ENCODE measurements at regions of chr19 and their contacts with region 1.

Region 1: DNA sequence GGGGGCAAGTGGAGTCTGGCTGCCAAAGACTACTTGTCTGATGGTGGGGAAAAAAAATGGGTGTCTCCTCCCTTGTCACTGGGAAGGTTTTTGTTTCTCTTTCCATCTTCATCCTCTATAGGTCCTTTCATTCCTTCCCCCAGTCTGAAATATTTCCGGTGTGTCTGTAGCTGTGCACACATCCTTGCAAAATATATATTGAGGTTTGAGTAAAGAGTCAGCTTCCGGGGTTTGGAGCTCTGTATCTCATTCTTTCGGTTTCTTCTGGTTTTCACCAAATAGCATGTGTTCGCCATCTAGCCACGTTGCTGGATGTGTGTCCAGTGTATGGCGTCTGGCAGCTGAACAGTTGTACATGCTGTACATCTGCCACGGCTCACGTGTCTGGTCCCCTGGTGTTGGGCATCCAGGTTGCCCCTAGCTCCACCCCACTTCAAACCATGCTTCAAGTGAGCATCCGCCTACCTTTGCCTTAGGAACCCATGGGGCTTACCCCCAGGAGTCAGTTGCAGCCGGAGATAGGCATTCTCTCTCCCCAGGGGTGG is 142.2 kb downstream of the SIPA1L3 start:
- DNase-seq: peak; percentile 17 to 83 (median 43)
- ATAC-seq: peak; percentile 91 to 93 (median 92)
- H3K4me3 ChIP-seq: peak overlapping the region; percentile 34 to 53
- H3K4me3 Mint-ChIP-seq: peak overlapping the region; percentile 72 to 82 (median 79)
- H3K27ac ChIP-seq: peak overlapping the region; percentile 89
- H3K27ac Mint-ChIP-seq: peak overlapping the region; percentile 95 to 96
- H3K4me1 ChIP-seq: peaks cover 24 to 44% of the 10 kb centered on the region in 2 experiments
- H3K4me1 Mint-ChIP-seq: peaks cover 49 to 64% (median 51%) of the 10 kb centered on the region in 3 donors
- H3K27me3 ChIP-seq: no peaks in the 10 kb centered on the region
- H3K27me3 Mint-ChIP-seq: no peaks in the 10 kb centered on the region

Region 2: GRCh38 chr19:37452500-37453245 is 596.5 kb before region 1 on chr19:
- CTCF ChIA-PET with region 1: no interaction called
- POLR2A ChIA-PET with region 1: no interaction called
- DNase-seq: no peak
- ATAC-seq: no peak
- H3K4me3 ChIP-seq: no peak overlapping the region
- H3K4me3 Mint-ChIP-seq: no peak overlapping the region
- H3K27ac ChIP-seq: no peak overlapping the region
- H3K27ac Mint-ChIP-seq: no peak overlapping the region
- H3K4me1 ChIP-seq: no peaks in the 10 kb centered on the region
- H3K4me1 Mint-ChIP-seq: peaks cover 0 to 2% (median 0%) of the 10 kb centered on the region in 3 donors
- H3K27me3 ChIP-seq: no peaks in the 10 kb centered on the region
- H3K27me3 Mint-ChIP-seq: no peaks in the 10 kb centered on the region

Region 3: GRCh38 chr19:37906869-37907734 is 142.1 kb before region 1 on chr19 and contains the start of gene SIPA1L3:
- CTCF ChIA-PET with region 1: interaction called, 8 to 12 read pairs
- POLR2A ChIA-PET with region 1: no interaction called
- DNase-seq: peak; percentile 83 to 96 (median 90)
- ATAC-seq: peak; percentile 97 to 99 (median 98)
- H3K4me3 ChIP-seq: peak within 1 kb of the TSS; percentile 80 to 91
- H3K4me3 Mint-ChIP-seq: peak within 1 kb of the TSS; percentile 77 to 92 (median 91)
- H3K27ac ChIP-seq: peak within 1 kb of the TSS; percentile 59
- H3K27ac Mint-ChIP-seq: peak within 1 kb of the TSS; percentile 85 to 90
- H3K4me1 ChIP-seq: peaks cover 7 to 23% of the 10 kb centered on the region in 2 experiments
- H3K4me1 Mint-ChIP-seq: peaks cover 32 to 38% (median 33%) of the 10 kb centered on the region in 3 donors
- H3K27me3 ChIP-seq: no peaks in the 10 kb centered on the region
- H3K27me3 Mint-ChIP-seq: no peaks in the 10 kb centered on the region
- total RNA-seq, gene SIPA1L3: 26.2 to 40.6 (median 35.5) TPM

Region 4: GRCh38 chr19:38134540-38135149 is 85.5 kb after region 1 on chr19:
- CTCF ChIA-PET with region 1: interaction called in 1 of 2 experiments, 22 read pairs
- POLR2A ChIA-PET with region 1: no interaction called
- DNase-seq: peak in 16 of 35 experiments; percentile 7 to 57 (median 16)
- ATAC-seq: no peak
- H3K4me3 ChIP-seq: no peak overlapping the region
- H3K4me3 Mint-ChIP-seq: no peak overlapping the region
- H3K27ac ChIP-seq: no peak overlapping the region
- H3K27ac Mint-ChIP-seq: no peak overlapping the region
- H3K4me1 ChIP-seq: no peaks in the 10 kb centered on the region
- H3K4me1 Mint-ChIP-seq: peaks cover 0 to 6% (median 0%) of the 10 kb centered on the region in 3 donors
- H3K27me3 ChIP-seq: no peaks in the 10 kb centered on the region
- H3K27me3 Mint-ChIP-seq: no peaks in the 10 kb centered on the region

Region 5: DNA sequence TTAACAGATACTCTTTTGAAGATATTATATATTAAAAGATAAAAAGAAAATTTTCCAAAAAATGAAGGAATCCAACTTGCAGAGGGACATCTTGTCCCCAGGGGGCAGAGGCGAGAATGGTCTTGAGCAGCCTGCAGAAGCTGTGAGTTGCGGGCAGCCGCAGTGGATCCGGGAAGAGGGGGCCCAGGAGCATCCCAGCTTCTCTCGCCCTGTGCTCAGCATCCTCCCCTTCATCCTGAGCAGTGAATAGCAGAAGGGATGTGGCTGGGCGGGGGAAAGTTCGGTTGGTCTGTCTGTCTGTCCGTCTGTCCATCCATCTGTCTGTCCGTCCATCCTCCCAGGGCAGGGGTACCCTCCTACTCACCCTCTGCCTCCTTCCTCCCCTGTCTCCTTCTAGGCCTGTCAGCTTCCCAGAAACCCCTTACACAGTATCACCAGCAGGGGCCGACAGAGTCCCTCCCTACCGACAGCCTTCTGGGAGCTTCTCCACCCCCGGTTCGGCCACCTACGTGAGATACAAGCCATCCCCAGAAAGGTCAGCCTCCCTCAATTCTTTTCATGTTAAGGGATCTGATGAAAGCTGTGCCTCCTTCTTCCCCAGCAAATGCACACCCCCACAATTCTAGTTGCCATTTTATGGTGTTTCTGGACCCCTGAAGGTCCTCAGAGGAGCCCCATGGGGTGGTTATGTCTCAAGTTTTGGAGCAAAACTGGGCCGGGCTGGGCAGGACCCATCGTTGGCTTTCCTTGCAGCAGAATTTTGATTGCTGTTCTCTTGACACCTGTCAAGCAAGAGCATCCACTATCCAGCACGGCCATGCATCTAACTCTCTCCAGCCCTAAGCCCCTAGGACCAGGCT is 93.2 kb after region 1 on chr19:
- CTCF ChIA-PET with region 1: interaction called in 1 of 2 experiments, 10 read pairs
- POLR2A ChIA-PET with region 1: no interaction called
- DNase-seq: peak in 21 of 35 experiments; percentile 7 to 39 (median 19)
- ATAC-seq: peak in 2 of 4 experiments; percentile 52 to 59
- H3K4me3 ChIP-seq: no peak overlapping the region
- H3K4me3 Mint-ChIP-seq: no peak overlapping the region
- H3K27ac ChIP-seq: no peak overlapping the region
- H3K27ac Mint-ChIP-seq: no peak overlapping the region
- H3K4me1 ChIP-seq: no peaks in the 10 kb centered on the region
- H3K4me1 Mint-ChIP-seq: peaks cover 0 to 2% (median 0%) of the 10 kb centered on the region in 3 donors
- H3K27me3 ChIP-seq: no peaks in the 10 kb centered on the region
- H3K27me3 Mint-ChIP-seq: no peaks in the 10 kb centered on the region

Region 6: GRCh38 chr19:38374429-38375176 is 325.4 kb after region 1 on chr19 and contains the start of gene PSMD8:
- CTCF ChIA-PET with region 1: no interaction called
- POLR2A ChIA-PET with region 1: no interaction called
- DNase-seq: peak; percentile 94 to 100 (median 99)
- ATAC-seq: peak; percentile 95 to 97 (median 97)
- H3K4me3 ChIP-seq: peak within 1 kb of the TSS; percentile 74 to 92
- H3K4me3 Mint-ChIP-seq: peak within 1 kb of the TSS; percentile 98 to 100 (median 99)
- H3K27ac ChIP-seq: peak within 1 kb of the TSS; percentile 79
- H3K27ac Mint-ChIP-seq: peak within 1 kb of the TSS; percentile 97 to 98
- H3K4me1 ChIP-seq: peaks cover 15 to 37% of the 10 kb centered on the region in 2 experiments
- H3K4me1 Mint-ChIP-seq: peaks cover 30 to 35% (median 31%) of the 10 kb centered on the region in 3 donors
- H3K27me3 ChIP-seq: peaks cover 0 to 13% of the 10 kb centered on the region in 2 experiments
- H3K27me3 Mint-ChIP-seq: peaks cover 0 to 11% of the 10 kb centered on the region in 2 donors
- total RNA-seq, gene PSMD8: 76.4 to 95.2 (median 85.8) TPM

Measured in T-cell (primary cell).